ENCODE measurements at regions of chr4 and their contacts with region 1.

Region 1: GRCh38 chr4:189060104-189060503 is 880.6 kb upstream of the FRG1 start:
- DNase-seq: no peak
- ATAC-seq: no peak
- H3K4me3 ChIP-seq: no peak overlapping the region
- H3K27ac ChIP-seq: no peak overlapping the region
- H3K4me1 ChIP-seq: no peaks in the 10 kb centered on the region
- H3K27me3 ChIP-seq: no peaks in the 10 kb centered on the region
- CTCF ChIP-seq: no peak

Region 2: DNA sequence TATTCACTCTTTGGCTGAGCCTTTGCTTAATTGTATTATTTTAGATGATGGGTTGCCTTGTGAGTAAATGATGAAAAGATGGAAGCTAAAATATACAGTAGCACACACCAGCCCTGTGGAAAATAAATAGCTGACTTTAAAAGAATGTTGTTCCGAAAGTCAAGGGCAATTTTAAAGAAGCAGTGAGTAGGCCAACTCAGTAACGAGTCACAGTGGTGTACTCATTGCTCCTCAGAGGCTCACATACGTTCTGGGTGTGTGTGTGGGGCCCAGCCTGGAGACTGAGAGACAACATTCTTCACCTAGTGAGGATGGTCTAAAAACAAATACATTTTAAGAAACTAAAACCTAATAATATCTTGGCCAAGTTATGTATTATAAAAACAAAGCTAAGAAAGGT is 280.5 kb before region 1 on chr4:
- CTCF ChIA-PET with region 1: interaction called, 18 read pairs
- POLR2A ChIA-PET with region 1: no interaction called
- in situ Hi-C with region 1: no loop called
- intact Hi-C with region 1: no loop called
- DNase-seq: no peak
- ATAC-seq: no peak
- H3K4me3 ChIP-seq: no peak overlapping the region
- H3K27ac ChIP-seq: no peak overlapping the region
- H3K4me1 ChIP-seq: no peaks in the 10 kb centered on the region
- H3K27me3 ChIP-seq: no peaks in the 10 kb centered on the region
- CTCF ChIP-seq: no peak

Region 3: DNA sequence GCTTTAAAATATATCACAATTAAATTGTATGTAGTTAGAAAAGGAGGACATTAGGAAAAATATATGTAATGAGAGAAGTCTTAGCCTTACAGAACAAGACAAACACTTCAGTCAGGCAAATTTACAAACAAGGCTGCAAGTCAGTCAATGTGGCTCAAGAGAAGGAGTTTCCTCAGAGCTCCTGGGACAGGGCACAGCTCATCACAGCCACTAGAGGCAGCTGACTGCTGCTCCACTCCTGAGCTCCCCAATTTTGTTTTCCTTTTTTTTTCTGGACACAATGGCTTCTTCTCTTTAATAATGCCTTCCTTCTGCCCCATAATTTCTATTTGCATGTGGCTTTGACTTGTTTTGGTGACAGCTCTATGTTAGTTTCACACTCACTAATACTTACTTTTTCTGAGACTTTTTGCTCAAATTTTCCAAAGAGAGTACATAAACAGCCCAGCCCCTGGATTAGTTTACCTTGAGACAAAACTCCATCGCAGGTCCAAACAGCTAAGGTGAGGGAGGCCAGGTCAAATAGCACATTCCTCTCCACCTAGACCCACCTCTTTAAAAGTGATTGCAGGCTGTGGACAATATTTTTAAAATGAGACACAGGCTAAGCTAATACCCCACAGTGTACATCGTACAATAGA is 30.2 kb after region 1 on chr4:
- CTCF ChIA-PET with region 1: no interaction called
- POLR2A ChIA-PET with region 1: no interaction called
- in situ Hi-C with region 1: no loop called
- intact Hi-C with region 1: no loop called
- DNase-seq: no peak
- ATAC-seq: 0 out of 2 replicates have a peak, but pooled peaks have one; percentile 71
- H3K4me3 ChIP-seq: no peak overlapping the region
- H3K27ac ChIP-seq: no peak overlapping the region
- H3K4me1 ChIP-seq: no peaks in the 10 kb centered on the region
- H3K27me3 ChIP-seq: no peaks in the 10 kb centered on the region
- CTCF ChIP-seq: peak; percentile 73

Region 4: DNA sequence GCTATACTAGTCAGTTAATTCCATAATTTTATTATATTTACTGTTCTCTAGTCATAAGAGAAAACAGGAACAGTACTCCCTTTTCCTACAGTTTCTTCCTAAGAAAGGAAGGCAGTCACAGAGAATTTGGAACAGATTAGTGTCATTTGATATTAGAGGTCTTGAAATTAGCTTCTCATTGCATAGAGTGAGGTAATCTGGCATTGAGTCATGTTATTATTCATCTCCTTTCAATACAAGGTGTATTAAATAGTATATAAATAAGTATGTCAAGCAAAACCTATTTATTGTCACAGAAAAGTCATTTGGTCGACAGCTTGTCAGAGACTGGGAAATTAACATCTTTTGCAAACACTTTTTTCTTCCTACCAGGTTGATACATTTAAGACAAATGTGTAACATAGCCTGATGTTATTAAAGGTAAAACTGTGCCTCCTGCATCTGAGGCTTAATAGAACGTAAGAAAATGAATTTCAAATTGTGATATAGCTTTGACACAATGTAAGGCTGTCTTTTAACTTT is 127.5 kb after region 1 on chr4:
- CTCF ChIA-PET with region 1: no interaction called
- POLR2A ChIA-PET with region 1: no interaction called
- in situ Hi-C with region 1: no loop called
- intact Hi-C with region 1: no loop called
- DNase-seq: no peak
- ATAC-seq: no peak
- H3K4me3 ChIP-seq: no peak overlapping the region
- H3K27ac ChIP-seq: no peak overlapping the region
- H3K4me1 ChIP-seq: no peaks in the 10 kb centered on the region
- H3K27me3 ChIP-seq: no peaks in the 10 kb centered on the region
- CTCF ChIP-seq: no peak